AG04449 (cell line): ENCODE measurements at regions of chr17 and their contacts with region 1.

Region 1: DNA sequence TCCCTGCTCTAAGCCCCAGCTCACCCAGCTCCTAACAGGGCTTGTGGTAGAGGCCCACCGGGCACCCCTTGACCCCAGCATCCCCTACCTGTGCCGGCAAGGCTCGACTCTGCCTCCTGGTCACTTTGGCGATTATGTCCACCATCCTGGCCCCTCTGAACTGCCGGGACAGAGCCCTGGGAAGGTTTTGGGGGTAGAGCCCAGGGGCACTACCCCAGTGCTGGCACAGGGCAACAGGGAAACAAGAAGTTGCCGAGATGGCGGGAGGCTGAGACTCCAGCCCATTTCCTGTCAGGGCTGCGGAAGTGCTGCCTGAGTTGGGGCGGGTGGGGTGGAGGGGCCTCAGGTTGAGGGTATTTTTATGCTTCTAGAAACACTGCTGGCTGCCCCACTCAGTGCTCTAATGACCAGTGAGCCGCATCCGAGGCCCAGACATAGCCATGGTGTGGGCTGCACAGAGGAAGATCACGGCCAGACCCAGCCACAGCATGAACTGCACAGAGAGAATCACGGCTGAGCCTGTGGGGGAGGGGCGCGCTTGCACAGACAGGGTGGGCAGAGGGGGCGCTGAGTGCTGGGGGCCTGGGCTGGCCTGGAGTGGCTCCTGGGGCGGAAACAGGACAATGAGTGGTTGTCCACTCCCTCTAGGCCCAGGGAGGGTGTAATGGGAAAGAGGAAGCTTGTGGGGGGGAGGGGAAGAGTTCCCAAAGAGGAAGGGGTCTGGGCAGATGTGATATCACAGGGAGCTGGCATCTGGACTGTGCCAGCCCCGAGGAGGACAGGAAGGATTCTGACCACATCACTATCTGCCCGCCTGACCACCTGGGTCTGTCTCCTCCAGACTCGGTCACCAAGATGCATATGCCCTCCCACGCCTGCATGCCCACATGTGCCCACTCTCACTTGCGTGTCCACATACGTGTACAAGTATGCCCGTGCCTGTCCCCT is 22.3 kb downstream of the ARHGAP27 start:
- DNase-seq: no peak
- H3K4me3 ChIP-seq: no peak overlapping the region
- CTCF ChIP-seq: no peak

Region 2: GRCh38 chr17:45270828-45271418 is 139.5 kb before region 1 on chr17:
- CTCF ChIA-PET with region 1: no interaction called
- POLR2A ChIA-PET with region 1: no interaction called
- DNase-seq: no peak
- H3K4me3 ChIP-seq: no peak overlapping the region
- CTCF ChIP-seq: peak; percentile 69

Region 3: DNA sequence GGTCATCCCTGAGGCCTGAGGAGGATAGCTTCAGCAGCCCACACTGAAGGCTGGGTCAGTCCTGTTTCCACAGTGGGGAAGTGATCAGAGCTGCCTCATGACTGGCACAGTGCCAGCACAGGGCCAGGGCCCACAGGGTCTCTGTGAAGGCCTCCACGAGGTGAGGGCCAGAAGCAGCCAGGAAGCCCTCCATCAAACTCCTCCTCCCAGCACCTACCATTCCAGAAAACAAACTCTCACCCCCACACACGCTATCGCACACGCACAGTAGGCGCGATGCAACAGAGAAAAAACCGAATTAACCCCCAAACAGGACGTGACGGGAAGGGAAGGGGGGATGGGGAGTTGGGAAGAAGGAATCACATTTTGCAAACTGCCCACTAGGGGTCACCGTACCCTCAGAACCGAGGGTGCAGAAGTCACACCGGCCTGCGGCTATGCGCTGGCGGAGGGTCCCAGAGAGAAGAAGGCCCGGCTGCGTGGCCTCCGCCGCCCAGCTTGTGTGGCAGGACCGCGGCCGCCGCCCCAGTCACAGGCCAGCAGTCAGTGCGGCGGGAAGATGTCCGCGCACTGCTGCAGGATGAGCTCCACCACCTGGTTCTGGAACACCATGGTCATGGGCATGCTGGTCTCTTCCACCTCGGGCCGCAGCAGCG is 15.4 kb before region 1 on chr17:
- CTCF ChIA-PET with region 1: interaction called, 43 read pairs
- POLR2A ChIA-PET with region 1: no interaction called
- DNase-seq: no peak
- H3K4me3 ChIP-seq: peak overlapping the region; percentile 51
- CTCF ChIP-seq: peak; percentile 81